GM12878 (cell line): ENCODE measurements at regions of chr19 and their contacts with region 1.

Region 1: GRCh38 chr19:44164673-44165512 is at the start of gene ZNF226:
- DNase-seq: peak; percentile 96
- ATAC-seq: peak; percentile 96
- H3K4me3 ChIP-seq: peak within 1 kb of the TSS; percentile 90
- H3K27ac ChIP-seq: peak within 1 kb of the TSS; percentile 89
- H3K4me1 ChIP-seq: peaks cover 4% of the 10 kb centered on the region
- H3K27me3 ChIP-seq: no peaks in the 10 kb centered on the region
- CTCF ChIP-seq: no peak
- EP300 ChIP-seq: no peak
- POLR2A ChIP-seq: peak; percentile 85
- RAD21 ChIP-seq: no peak
- polyA plus RNA-seq, gene ZNF226: 35.1 to 35.3 TPM

Region 2: DNA sequence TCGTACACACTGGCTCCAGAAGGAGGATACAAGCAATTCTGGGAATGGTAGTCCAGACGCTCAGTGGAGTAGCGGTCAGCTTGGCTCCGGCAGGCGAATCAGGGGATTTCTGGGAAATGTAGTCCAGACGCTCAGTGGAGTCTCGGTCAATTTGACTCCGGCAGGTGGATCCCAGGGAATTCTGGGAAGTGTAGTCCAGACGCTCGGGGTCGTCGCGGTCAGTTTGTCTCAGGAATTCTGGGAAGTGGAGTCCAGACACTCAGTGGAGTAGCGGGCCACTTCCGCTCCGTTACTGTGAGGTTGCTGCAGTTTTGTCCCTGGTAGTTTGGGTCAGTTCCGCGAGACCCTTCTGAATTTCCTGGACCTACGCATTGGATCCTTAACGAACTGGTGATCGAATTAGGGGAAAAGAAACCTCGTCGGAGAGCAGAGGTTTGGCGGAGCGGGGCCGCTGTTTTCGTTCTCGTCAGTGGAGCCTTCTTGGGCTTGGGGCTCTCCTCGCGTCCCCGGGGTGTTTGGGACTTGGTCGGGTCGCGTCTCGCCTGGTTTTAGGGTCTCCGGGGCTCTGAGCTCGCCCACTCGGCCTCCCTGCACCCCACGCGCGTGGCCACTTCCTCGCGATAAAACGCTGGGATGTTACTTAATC is 51.6 kb before region 1 on chr19 and contains the start of gene ZNF225:
- CTCF ChIA-PET with region 1: no interaction called
- POLR2A ChIA-PET with region 1: interaction called, 5 read pairs
- RAD21 ChIA-PET with region 1: no interaction called
- SMC1A ChIA-PET with region 1: interaction called, 7 read pairs
- in situ Hi-C with region 1: no loop called
- intact Hi-C with region 1: loop called (anchors 2 kb)
- DNase-seq: peak; percentile 87
- ATAC-seq: peak; percentile 98
- H3K4me3 ChIP-seq: peak within 1 kb of the TSS; percentile 91
- H3K27ac ChIP-seq: peak within 1 kb of the TSS; percentile 73
- H3K4me1 ChIP-seq: no peaks in the 10 kb centered on the region
- H3K27me3 ChIP-seq: no peaks in the 10 kb centered on the region
- CTCF ChIP-seq: no peak
- EP300 ChIP-seq: no peak
- POLR2A ChIP-seq: peak; percentile 71
- RAD21 ChIP-seq: no peak
- polyA plus RNA-seq, gene ZNF225: 1.3 to 1.4 TPM

Region 3: GRCh38 chr19:44149776-44150175 is 15.1 kb before region 1 on chr19:
- CTCF ChIA-PET with region 1: no interaction called
- POLR2A ChIA-PET with region 1: interaction called, 11 read pairs
- RAD21 ChIA-PET with region 1: no interaction called
- SMC1A ChIA-PET with region 1: interaction called, 3 read pairs
- in situ Hi-C with region 1: no loop called
- intact Hi-C with region 1: no loop called
- DNase-seq: no peak
- ATAC-seq: no peak
- H3K4me3 ChIP-seq: no peak overlapping the region
- H3K27ac ChIP-seq: no peak overlapping the region
- H3K4me1 ChIP-seq: no peaks in the 10 kb centered on the region
- H3K27me3 ChIP-seq: no peaks in the 10 kb centered on the region
- CTCF ChIP-seq: no peak
- EP300 ChIP-seq: no peak
- POLR2A ChIP-seq: no peak
- RAD21 ChIP-seq: no peak

Region 4: DNA sequence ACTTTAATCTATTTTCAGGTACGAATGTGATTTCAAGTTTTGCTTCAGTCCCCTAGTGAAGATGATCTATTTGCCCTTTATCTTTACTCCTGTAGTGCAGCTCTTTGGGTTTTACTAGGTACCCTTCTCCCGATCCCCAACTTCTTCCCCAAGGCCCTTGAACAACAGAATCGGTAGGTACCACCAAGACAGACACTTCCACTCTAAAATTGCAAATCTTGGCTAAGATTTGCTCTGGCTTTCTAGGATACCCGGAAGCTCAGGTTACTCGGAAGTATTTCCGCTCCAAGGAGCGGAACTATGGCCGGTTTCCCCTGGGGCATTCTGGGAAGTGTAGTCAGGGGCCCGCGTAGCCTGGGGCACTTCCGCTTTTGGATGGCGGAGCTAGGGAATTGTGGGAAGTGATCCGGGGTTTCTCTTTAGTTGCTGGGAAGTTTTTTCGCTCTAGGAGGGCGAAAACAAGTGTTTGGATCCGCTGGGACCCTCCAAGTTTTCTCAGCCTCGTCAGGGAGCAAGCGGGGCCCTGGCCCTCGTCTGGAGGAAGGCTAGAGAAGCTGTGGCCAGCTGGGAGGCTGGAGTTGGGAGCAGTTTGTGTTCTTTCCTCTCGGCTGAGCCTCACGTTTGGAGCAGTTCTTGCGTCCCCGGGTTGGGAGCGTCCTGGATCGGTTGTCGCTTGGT is 42.4 kb after region 1 on chr19:
- CTCF ChIA-PET with region 1: interaction called, 5 read pairs
- POLR2A ChIA-PET with region 1: interaction called, 16 read pairs
- RAD21 ChIA-PET with region 1: interaction called, 11 read pairs
- SMC1A ChIA-PET with region 1: interaction called, 12 read pairs
- in situ Hi-C with region 1: no loop called
- intact Hi-C with region 1: loop called (anchors 1 kb)
- DNase-seq: peak; percentile 66
- ATAC-seq: peak; percentile 97
- H3K4me3 ChIP-seq: peak overlapping the region; percentile 77
- H3K27ac ChIP-seq: peak overlapping the region; percentile 59
- H3K4me1 ChIP-seq: no peaks in the 10 kb centered on the region
- H3K27me3 ChIP-seq: no peaks in the 10 kb centered on the region
- CTCF ChIP-seq: no peak
- EP300 ChIP-seq: no peak
- POLR2A ChIP-seq: 0 out of 2 replicates have a peak, but pooled peaks have one; percentile 18
- RAD21 ChIP-seq: no peak

Region 5: GRCh38 chr19:44212250-44212865 is 47.5 kb after region 1 on chr19 and contains the start of gene ZNF227:
- CTCF ChIA-PET with region 1: interaction called, 5 read pairs
- POLR2A ChIA-PET with region 1: interaction called, 16 read pairs
- RAD21 ChIA-PET with region 1: interaction called, 11 read pairs
- SMC1A ChIA-PET with region 1: interaction called, 12 read pairs
- in situ Hi-C with region 1: no loop called
- intact Hi-C with region 1: loop called (anchors 1 kb)
- DNase-seq: peak; percentile 48
- ATAC-seq: peak; percentile 98
- H3K4me3 ChIP-seq: peak within 1 kb of the TSS; percentile 82
- H3K27ac ChIP-seq: peak within 1 kb of the TSS; percentile 82
- H3K4me1 ChIP-seq: no peaks in the 10 kb centered on the region
- H3K27me3 ChIP-seq: no peaks in the 10 kb centered on the region
- CTCF ChIP-seq: no peak
- EP300 ChIP-seq: no peak
- POLR2A ChIP-seq: peak; percentile 89
- RAD21 ChIP-seq: no peak
- polyA plus RNA-seq, gene ZNF227: 4.3 to 5.1 TPM

Region 6: GRCh38 chr19:44260363-44261070 is 95.6 kb after region 1 on chr19:
- CTCF ChIA-PET with region 1: no interaction called
- POLR2A ChIA-PET with region 1: interaction called, 6 read pairs
- RAD21 ChIA-PET with region 1: no interaction called
- SMC1A ChIA-PET with region 1: interaction called, 3 read pairs
- in situ Hi-C with region 1: no loop called
- intact Hi-C with region 1: loop called (anchors 10 kb)
- DNase-seq: no peak
- ATAC-seq: peak; percentile 27
- H3K4me3 ChIP-seq: peak overlapping the region; percentile 72
- H3K27ac ChIP-seq: no peak overlapping the region
- H3K4me1 ChIP-seq: no peaks in the 10 kb centered on the region
- H3K27me3 ChIP-seq: no peaks in the 10 kb centered on the region
- CTCF ChIP-seq: no peak
- EP300 ChIP-seq: no peak
- POLR2A ChIP-seq: no peak
- RAD21 ChIP-seq: no peak

Region 7: GRCh38 chr19:44576843-44577565 is 412.1 kb after region 1 on chr19:
- CTCF ChIA-PET with region 1: no interaction called
- POLR2A ChIA-PET with region 1: no interaction called
- RAD21 ChIA-PET with region 1: no interaction called
- SMC1A ChIA-PET with region 1: no interaction called
- in situ Hi-C with region 1: no loop called
- intact Hi-C with region 1: no loop called
- DNase-seq: no peak
- ATAC-seq: peak; percentile 52; the same call in 2 of the 3 replicates
- H3K4me3 ChIP-seq: no peak overlapping the region
- H3K27ac ChIP-seq: no peak overlapping the region
- H3K4me1 ChIP-seq: no peaks in the 10 kb centered on the region
- H3K27me3 ChIP-seq: no peaks in the 10 kb centered on the region; a peak in 1 of 4 replicates
- CTCF ChIP-seq: peak; percentile 35 to 53 (median 38); a peak in 5 of 6 replicates
- EP300 ChIP-seq: no peak
- POLR2A ChIP-seq: no peak
- RAD21 ChIP-seq: 0 out of 2 replicates have a peak, but pooled peaks have one; percentile 42